H1 (cell line): ENCODE measurements at regions of chrX and their contacts with region 1.

Region 1: GRCh38 chrX:154397819-154398724 is at the start of gene RPL10:
- DNase-seq: peak; percentile 86 to 89
- H3K4me3 ChIP-seq: peak within 1 kb of the TSS; percentile 82 to 99 (median 96)
- H3K27ac ChIP-seq: peak within 1 kb of the TSS; percentile 95
- H3K4me1 ChIP-seq: peaks cover 0 to 6% (median 0%) of the 10 kb centered on the region in 4 experiments; a peak in 2 of 7 replicates
- H3K27me3 ChIP-seq: no peaks in the 10 kb centered on the region
- CTCF ChIP-seq: no peak
- EP300 ChIP-seq: no peak
- POLR2A ChIP-seq: peak in 1 of 2 experiments; percentile 99; a peak in 2 of 3 replicates
- RAD21 ChIP-seq: no peak
- total RNA-seq, gene RPL10: 2,633 and 2,739 TPM in 2 replicates

Region 2: DNA sequence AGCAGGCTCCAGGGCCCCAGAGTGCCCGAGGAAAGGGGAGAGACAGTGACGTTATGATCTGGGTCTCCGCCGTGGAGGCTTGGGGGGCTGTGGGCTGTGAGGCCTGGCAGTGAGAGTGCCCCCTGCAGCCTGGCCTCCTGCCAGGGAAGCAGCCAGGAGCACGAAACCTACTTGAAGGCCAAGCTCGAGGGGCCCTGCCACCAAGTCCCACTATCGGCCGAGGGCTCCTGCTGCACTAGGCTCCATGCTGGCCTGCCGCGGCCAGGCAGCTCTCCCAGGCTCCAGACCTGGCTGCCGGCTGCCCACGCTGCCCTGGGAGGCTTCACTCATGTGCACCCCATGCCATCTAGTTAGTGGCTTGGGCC is 42.3 kb before region 1 on chrX:
- CTCF ChIA-PET with region 1: no interaction called
- POLR2A ChIA-PET with region 1: interaction called, 36 read pairs
- DNase-seq: no peak
- H3K4me3 ChIP-seq: no peak overlapping the region
- H3K27ac ChIP-seq: no peak overlapping the region
- H3K4me1 ChIP-seq: no peaks in the 10 kb centered on the region
- H3K27me3 ChIP-seq: no peaks in the 10 kb centered on the region
- CTCF ChIP-seq: no peak
- EP300 ChIP-seq: no peak
- POLR2A ChIP-seq: peak in 1 of 2 experiments; percentile 51; a peak in 1 of 3 replicates
- RAD21 ChIP-seq: no peak

Region 3: DNA sequence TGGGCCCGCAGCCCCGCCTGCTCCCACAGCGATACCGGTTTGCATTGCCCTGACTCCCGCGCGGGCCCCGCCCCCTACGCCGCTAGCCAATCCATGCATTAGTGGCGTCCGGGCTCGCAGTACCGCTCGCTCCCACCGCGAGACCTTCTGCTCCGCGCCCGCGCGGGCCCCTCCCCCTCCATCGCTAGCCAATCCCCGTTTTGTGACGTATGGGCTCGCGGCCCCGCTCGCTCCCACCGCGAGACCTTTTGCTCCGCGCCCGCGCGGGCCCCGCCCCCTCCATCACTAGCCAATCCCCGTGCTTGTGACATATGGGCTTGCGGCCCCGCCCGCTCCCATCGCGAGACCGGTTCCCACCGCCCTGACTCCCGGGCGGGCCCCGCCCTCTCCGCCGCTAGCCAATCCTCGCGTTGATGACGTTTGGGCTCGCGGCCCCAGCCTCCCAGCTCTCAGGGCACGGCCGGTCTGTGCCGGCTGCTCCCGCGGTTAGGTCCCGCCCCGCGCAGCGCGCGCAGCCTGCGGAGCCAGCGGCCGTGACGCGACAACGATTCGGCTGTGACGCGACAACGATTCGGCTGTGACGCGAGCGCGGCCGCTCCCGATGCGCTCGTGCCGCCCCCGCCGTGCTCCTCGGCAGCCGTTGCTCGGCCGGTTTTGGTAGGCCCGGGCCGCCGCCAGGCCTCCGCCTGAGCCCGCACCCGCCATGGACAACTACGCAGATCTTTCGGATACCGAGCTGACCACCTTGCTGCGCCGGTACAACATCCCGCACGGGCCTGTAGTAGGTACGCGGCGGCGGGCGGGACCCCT is 19.1 kb before region 1 on chrX and contains the start of gene EMD:
- CTCF ChIA-PET with region 1: interaction called, 20 read pairs
- POLR2A ChIA-PET with region 1: interaction called, 107 read pairs
- DNase-seq: peak; percentile 90 to 93
- H3K4me3 ChIP-seq: peak within 1 kb of the TSS; percentile 75 to 97 (median 78)
- H3K27ac ChIP-seq: peak within 1 kb of the TSS; percentile 96
- H3K4me1 ChIP-seq: peaks cover 0 to 22% (median 10%) of the 10 kb centered on the region in 4 experiments; a peak in 6 of 7 replicates
- H3K27me3 ChIP-seq: peaks cover 0 to 3% (median 0%) of the 10 kb centered on the region in 4 experiments; a peak in 2 of 7 replicates
- CTCF ChIP-seq: no peak
- EP300 ChIP-seq: no peak
- POLR2A ChIP-seq: peak in 1 of 2 experiments; percentile 40; a peak in 1 of 3 replicates
- RAD21 ChIP-seq: no peak
- total RNA-seq, gene EMD: 104 and 109 TPM in 2 replicates

Region 4: DNA sequence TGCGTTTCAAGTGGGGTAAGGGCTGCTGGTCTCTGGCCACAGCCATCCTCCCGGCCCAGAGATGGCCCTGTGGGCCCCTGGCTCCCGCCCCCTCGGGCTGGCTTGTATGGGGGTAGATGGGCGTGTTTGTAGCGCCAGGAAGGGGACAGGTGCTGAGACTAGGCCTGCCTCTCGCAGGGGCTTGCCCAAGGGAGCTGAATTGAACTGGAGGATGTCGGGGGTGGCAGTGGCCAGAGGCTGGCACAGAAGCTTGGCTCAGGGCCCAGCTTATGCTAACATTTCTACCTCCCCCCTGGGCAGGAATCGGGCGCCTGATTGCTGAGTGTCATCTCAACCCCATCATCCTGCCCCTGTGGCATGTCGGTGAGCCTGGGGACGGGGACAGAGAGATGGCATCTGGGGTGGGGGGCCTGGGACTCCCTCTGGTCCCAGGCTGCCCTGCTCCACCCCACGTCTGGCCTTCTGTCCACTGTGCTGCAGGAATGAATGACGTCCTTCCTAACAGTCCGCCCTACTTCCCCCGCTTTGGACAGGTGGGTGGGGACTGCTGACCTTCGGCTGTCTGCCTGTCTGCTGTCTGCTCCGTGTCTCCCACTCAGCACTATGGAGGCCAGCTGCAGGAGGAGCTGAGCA is 21.8 kb after region 1 on chrX:
- CTCF ChIA-PET with region 1: interaction called, 5 read pairs
- POLR2A ChIA-PET with region 1: interaction called, 76 read pairs
- DNase-seq: no peak
- H3K4me3 ChIP-seq: no peak overlapping the region
- H3K27ac ChIP-seq: no peak overlapping the region
- H3K4me1 ChIP-seq: no peaks in the 10 kb centered on the region
- H3K27me3 ChIP-seq: no peaks in the 10 kb centered on the region
- CTCF ChIP-seq: no peak
- EP300 ChIP-seq: no peak
- POLR2A ChIP-seq: no peak
- RAD21 ChIP-seq: no peak

Region 5: DNA sequence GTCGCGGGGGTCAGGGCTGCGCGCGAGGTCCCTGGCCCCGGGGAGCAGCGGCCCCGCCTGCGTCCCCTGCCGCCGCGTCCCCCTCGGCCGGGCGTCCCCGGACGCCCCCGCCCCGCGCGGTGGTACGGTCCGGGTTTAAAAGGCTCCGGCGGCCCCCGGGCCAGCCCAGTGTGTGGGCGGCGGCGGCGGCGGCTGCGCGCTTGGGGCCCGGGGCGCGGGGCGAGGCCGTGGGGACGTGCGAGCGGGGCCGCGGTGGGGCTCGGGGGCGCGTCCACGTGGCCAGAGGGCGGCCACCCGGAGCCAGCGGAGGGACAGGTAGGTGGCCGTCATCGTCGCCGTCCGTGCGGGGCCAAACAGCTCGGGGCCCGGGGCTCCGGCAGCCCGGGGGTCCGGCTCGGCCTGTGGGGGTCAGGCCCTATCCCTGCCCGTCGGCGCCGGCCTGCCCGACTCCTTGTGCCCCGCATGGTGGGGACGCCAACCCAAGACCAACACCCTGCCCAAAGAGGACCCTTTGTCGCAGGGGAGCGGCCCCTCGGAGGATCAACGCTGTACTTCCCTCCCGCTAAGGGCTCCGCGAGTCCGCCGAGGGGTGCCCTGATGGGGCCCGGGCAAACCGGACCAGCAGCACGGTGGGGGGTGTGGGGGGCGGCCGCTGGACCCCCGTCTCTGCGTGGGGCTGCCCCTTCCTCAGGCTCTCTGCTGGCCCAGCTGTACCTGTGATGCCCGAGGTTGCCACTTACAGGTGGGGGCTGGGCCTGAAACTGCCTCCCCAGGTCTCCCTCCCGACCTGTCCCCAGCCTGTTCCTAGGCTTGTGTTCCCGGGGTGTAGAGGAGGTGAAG is 60.3 kb after region 1 on chrX and contains the start of gene PLXNA3:
- CTCF ChIA-PET with region 1: no interaction called
- POLR2A ChIA-PET with region 1: interaction called, 14 read pairs
- DNase-seq: peak in 1 of 2 experiments; percentile 62
- H3K4me3 ChIP-seq: peak within 1 kb of the TSS; percentile 47 to 71 (median 58)
- H3K27ac ChIP-seq: no peak within 1 kb of the TSS
- H3K4me1 ChIP-seq: peaks cover 0 to 2% (median 0%) of the 10 kb centered on the region in 4 experiments; a peak in 2 of 7 replicates
- H3K27me3 ChIP-seq: peaks cover 0 to 3% (median 0%) of the 10 kb centered on the region in 4 experiments; a peak in 1 of 7 replicates
- CTCF ChIP-seq: no peak
- EP300 ChIP-seq: peak in 1 of 2 experiments; percentile 69; a peak in 1 of 3 replicates
- POLR2A ChIP-seq: peak in 1 of 2 experiments; percentile 27; a peak in 1 of 3 replicates
- RAD21 ChIP-seq: no peak
- total RNA-seq, gene PLXNA3: 18.2 and 23.5 TPM in 2 replicates

Region 6: GRCh38 chrX:154534862-154535670 is 137.0 kb after region 1 on chrX:
- CTCF ChIA-PET with region 1: interaction called, 3 read pairs
- POLR2A ChIA-PET with region 1: interaction called, 26 read pairs
- DNase-seq: peak; percentile 54 to 91
- H3K4me3 ChIP-seq: no peak overlapping the region
- H3K27ac ChIP-seq: no peak overlapping the region
- H3K4me1 ChIP-seq: peaks cover 0 to 3% (median 0%) of the 10 kb centered on the region in 4 experiments; a peak in 2 of 7 replicates
- H3K27me3 ChIP-seq: no peaks in the 10 kb centered on the region
- CTCF ChIP-seq: peak in 2 of 3 experiments; percentile 96 to 100; a peak in 3 of 4 replicates
- EP300 ChIP-seq: no peak
- POLR2A ChIP-seq: no peak
- RAD21 ChIP-seq: peak; percentile 98 to 99